ENCODE measurements at regions of chr16 and their contacts with region 1.

Region 1: GRCh38 chr16:89602273-89602951 is 11.0 kb upstream of the DPEP1 start:
- DNase-seq: peak; percentile 26 to 72 (median 32)
- H3K4me3 ChIP-seq: no peak overlapping the region
- H3K4me3 Mint-ChIP-seq: peak overlapping the region; percentile 14 to 78 (median 55)
- H3K27ac ChIP-seq: no peak overlapping the region
- H3K27ac Mint-ChIP-seq: peak overlapping the region in 5 of 8 donors; percentile 8 to 65 (median 37)
- H3K4me1 ChIP-seq: peaks cover 11% of the 10 kb centered on the region
- H3K4me1 Mint-ChIP-seq: peaks cover 18 to 32% (median 18%) of the 10 kb centered on the region in 3 donors
- H3K27me3 ChIP-seq: no peaks in the 10 kb centered on the region
- H3K27me3 Mint-ChIP-seq: peaks cover 0 to 3% of the 10 kb centered on the region in 2 donors

Region 2: DNA sequence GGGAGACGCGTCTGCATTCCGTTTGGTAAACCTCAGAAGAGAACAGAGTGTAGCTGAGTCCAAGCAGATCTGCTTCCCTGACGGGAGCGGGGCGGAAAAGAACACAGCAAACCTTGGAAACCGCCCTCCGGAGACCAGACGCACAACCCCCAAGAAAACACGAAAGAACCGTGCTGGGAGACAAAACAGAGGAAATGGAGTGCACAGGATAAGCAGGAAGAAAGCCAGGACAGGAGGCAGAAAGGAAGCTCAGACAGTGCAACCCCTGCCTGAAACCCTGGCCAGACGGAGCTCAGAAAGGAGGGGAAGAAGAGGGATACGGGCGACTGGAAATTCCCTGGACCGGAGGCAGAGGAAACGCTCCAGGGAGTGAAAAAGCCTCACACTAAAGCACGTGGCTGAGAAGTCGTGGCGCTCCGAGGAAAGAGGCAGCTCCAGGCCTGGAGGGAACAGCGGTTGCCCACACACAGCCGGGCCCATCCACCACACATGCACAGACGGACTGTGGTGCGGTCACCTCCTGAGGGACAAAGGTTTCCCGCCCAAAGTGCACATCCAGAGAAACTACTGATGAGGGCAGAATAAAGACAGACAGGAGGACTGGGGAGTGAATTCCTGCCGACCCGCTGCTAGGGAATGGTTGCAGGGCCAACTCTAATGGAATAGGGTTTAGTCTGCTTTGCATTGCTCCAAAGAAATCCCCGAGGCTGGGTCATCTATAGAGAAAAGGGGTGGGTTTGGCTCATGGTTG is 21.3 kb after region 1 on chr16:
- CTCF ChIA-PET with region 1: no interaction called
- POLR2A ChIA-PET with region 1: interaction called, 10 read pairs
- DNase-seq: no peak
- H3K4me3 ChIP-seq: no peak overlapping the region
- H3K4me3 Mint-ChIP-seq: no peak overlapping the region
- H3K27ac ChIP-seq: no peak overlapping the region
- H3K27ac Mint-ChIP-seq: peak overlapping the region in 1 of 8 donors; percentile 74
- H3K4me1 ChIP-seq: no peaks in the 10 kb centered on the region
- H3K4me1 Mint-ChIP-seq: no peaks in the 10 kb centered on the region
- H3K27me3 ChIP-seq: no peaks in the 10 kb centered on the region
- H3K27me3 Mint-ChIP-seq: peaks cover 0 to 27% of the 10 kb centered on the region in 2 donors